ENCODE measurements at regions of chr15 and their contacts with region 1.

Region 1: GRCh38 chr15:42920519-42921227 is at the start of gene TTBK2:
- DNase-seq: peak; percentile 98
- H3K4me3 ChIP-seq: peak within 1 kb of the TSS; percentile 44 to 98 (median 58)
- H3K27ac ChIP-seq: peak within 1 kb of the TSS; percentile 5
- H3K4me1 ChIP-seq: peaks cover 13% of the 10 kb centered on the region
- H3K27me3 ChIP-seq: no peaks in the 10 kb centered on the region
- CTCF ChIP-seq: peak in 1 of 2 donors; percentile 17
- total RNA-seq, gene TTBK2: 14.8 to 25.8 TPM

Region 2: GRCh38 chr15:42716626-42717025 is 204.0 kb before region 1 on chr15:
- CTCF ChIA-PET with region 1: no interaction called
- dilution Hi-C with region 1: no loop called
- in situ Hi-C with region 1: loop called in 1 of 2 experiments (anchors 10 kb)
- intact Hi-C with region 1: no loop called
- DNase-seq: no peak
- H3K4me3 ChIP-seq: no peak overlapping the region
- H3K27ac ChIP-seq: no peak overlapping the region
- H3K4me1 ChIP-seq: peaks cover 8% of the 10 kb centered on the region
- H3K27me3 ChIP-seq: no peaks in the 10 kb centered on the region
- CTCF ChIP-seq: no peak

Region 3: DNA sequence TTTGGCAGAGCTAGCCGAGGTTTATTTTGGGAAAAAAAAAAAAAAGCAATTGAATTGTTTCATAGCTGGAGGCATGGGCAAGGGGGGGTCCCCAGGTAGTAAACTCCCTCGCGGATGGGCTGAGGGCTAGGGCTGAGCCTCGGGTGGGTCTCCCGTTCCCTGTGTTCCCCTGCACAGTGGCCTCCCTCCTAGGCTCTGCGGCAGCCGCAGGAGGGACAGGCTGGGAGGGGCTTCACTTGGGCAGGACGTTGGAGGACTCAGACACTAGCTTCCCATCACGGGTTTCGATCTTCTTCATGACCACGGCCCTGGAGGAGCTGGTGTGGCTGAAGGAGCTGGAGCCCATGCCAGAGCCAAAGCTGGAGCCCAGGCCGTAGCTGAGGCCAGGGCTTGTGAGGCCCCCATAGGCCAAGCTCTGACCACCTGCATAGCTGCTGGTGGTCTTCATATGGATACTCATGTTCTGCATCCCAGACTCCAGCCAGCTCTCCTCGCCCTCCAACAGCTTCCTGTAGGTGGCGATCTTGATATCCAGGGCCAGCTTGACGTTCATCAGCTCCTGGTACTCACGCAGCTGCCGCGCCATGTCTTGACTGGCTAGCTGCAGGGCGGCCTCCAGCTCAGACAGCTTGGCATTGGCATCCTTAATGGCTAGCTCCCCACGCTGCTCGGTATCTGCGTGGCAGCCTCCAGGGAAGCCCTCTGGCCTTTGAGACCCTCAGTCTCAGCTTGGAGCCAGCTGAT is 119.8 kb before region 1 on chr15:
- CTCF ChIA-PET with region 1: interaction called, 6 read pairs
- dilution Hi-C with region 1: no loop called
- in situ Hi-C with region 1: loop called in 1 of 2 experiments (anchors 10 kb)
- intact Hi-C with region 1: no loop called
- DNase-seq: no peak
- H3K4me3 ChIP-seq: no peak overlapping the region
- H3K27ac ChIP-seq: no peak overlapping the region
- H3K4me1 ChIP-seq: peaks cover 5% of the 10 kb centered on the region
- H3K27me3 ChIP-seq: no peaks in the 10 kb centered on the region
- CTCF ChIP-seq: peak in 1 of 2 donors; percentile 7

Region 4: DNA sequence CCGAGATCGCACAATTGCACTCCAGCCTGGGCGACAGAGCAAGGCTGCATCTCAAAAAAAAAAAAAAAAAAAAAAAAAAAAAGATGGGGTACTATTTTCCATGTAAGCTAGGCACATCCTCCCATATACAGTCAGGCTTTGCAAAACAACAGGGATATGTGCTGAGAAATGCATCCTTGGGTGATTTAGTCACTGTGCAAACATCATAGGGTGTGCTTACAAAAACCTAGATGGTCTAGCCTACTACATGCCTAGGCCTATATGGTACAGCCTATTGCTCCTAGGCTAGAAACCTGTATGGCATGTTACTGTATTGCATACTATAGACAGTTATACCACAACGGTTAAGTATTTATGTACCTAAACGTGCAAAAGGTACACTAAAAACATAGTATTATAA is 75.1 kb before region 1 on chr15:
- CTCF ChIA-PET with region 1: no interaction called
- dilution Hi-C with region 1: no loop called
- in situ Hi-C with region 1: no loop called
- intact Hi-C with region 1: loop called (anchors 5 kb)
- DNase-seq: peak; percentile 73
- H3K4me3 ChIP-seq: no peak overlapping the region
- H3K27ac ChIP-seq: no peak overlapping the region
- H3K4me1 ChIP-seq: no peaks in the 10 kb centered on the region
- H3K27me3 ChIP-seq: no peaks in the 10 kb centered on the region
- CTCF ChIP-seq: no peak

Region 5: GRCh38 chr15:43346305-43346704 is 425.6 kb after region 1 on chr15:
- CTCF ChIA-PET with region 1: no interaction called
- dilution Hi-C with region 1: no loop called
- in situ Hi-C with region 1: no loop called
- intact Hi-C with region 1: no loop called
- DNase-seq: no peak
- H3K4me3 ChIP-seq: no peak overlapping the region
- H3K27ac ChIP-seq: no peak overlapping the region
- H3K4me1 ChIP-seq: no peaks in the 10 kb centered on the region
- H3K27me3 ChIP-seq: no peaks in the 10 kb centered on the region
- CTCF ChIP-seq: no peak